ENCODE measurements at regions of chr7 and their contacts with region 1.

Region 1: DNA sequence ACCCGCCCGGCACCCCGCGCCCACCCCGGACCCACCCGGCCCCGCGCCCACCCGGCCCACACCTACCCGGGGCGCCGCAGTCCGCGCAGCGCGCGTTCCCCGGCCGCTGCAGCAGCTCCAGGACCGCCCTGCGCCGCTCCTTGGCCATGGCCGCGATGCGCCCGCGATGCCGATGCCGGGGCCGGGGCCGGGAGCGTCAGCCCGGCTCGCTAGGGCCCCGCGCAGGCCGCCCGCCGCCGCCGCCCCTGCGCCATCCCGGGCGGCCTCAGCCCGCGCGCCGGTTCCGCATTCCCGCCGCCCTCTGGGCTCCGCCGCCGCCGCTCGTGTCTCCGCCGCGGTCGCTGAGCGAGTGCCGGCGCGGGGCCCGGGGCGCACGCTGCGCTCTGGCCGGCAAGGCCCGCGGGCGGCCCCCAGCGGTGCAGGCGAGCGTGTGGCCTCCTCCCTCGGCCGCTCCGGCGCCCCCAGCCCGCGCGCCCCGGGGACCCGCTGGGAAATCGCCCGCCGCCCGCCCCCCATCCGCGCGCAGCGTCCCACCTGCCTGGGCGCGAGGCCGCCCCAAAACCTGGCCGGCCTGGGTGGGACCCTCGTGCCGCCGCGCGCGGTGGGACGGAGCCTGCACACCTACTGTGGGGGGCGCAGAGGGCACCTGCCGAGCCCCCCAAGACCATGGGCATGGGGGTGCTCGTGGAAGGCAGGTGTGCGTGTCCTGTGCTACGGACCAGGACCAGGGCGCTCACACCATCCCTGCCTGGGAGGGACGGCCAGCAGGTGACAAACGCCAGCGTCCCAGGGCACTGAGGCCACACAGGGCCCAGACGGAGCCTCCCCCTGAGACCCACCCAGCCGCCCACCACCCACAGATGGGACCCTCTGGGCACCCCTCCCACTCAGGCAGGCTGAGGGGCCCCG is at the start of gene ADAP1:
- DNase-seq: peak in 4 of 10 donors; percentile 52 to 78 (median 60)
- H3K4me3 ChIP-seq: peak within 1 kb of the TSS; percentile 49 to 90 (median 80)
- H3K27ac ChIP-seq: peak within 1 kb of the TSS in 58 of 59 donors; percentile 55 to 98 (median 93)
- H3K27me3 ChIP-seq: no peaks in the 10 kb centered on the region
- CTCF ChIP-seq: peak in 28 of 56 donors; percentile 7 to 60 (median 32)
- total RNA-seq, gene ADAP1: 97.0 to 199 (median 136) TPM

Region 2: GRCh38 chr7:909358-910329 is 44.9 kb before region 1 on chr7:
- intact Hi-C with region 1: loop called (anchors 1 to 2 kb)
- DNase-seq: peak in 5 of 10 donors; percentile 57 to 68 (median 64)
- H3K4me3 ChIP-seq: peak overlapping the region in 33 of 59 donors; percentile 9 to 55 (median 38)
- H3K27ac ChIP-seq: peak overlapping the region; percentile 49 to 100 (median 97)
- H3K27me3 ChIP-seq: no peaks in the 10 kb centered on the region
- CTCF ChIP-seq: peak in 2 of 56 donors; percentile 3 to 5

Region 3: DNA sequence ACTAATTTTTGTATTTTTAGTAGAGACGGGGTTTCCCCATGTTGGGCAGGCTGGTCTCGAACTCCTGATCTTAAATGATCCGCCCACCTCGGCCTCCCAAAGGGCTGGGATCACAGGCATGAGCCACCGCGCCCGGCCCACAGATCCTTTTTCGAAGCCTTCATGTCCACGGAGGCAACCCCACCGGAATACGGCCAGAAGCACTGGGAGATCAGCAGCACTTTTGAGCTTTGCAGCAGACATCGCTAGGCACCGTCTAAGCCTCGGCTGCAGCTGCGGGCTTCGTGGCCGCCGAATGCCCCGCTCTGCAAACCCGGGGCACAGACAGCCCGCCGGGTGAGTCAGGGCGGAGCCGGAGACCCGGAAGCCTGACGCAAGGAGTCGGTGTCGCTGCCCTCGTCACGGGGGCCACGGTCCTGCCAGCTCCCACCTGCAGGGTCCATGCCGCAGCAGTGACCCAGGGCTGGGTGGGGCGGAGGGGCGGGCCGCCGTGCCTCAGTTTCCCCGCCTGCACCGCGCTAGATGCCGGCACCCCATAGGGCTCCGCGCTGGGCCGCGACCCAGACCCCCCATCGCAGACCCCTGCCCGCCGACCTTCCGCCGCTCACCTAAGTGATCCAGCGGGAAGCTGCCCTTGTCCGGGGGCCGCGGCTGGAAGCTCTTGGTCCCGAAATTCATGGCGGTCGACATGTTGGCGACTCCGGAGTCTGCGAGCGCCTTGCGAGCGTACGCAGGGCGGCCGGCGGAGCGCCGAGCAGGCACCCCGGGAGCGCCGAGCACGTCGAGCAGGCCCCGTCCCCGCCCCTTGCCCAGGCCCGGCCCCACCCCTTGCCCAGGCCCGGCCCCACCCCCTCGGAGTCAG is 20.5 kb after region 1 on chr7 and contains the start of gene COX19:
- intact Hi-C with region 1: loop called in 1 of 2 experiments (anchors 2 kb)
- DNase-seq: peak; percentile 70 to 95 (median 82)
- H3K4me3 ChIP-seq: peak within 1 kb of the TSS; percentile 61 to 100 (median 98)
- H3K27ac ChIP-seq: peak within 1 kb of the TSS in 58 of 59 donors; percentile 21 to 98 (median 89)
- H3K27me3 ChIP-seq: no peaks in the 10 kb centered on the region
- CTCF ChIP-seq: peak in 24 of 56 donors; percentile 11 to 51 (median 27)
- total RNA-seq, gene COX19: 11.2 to 38.9 (median 18.5) TPM

Measured in dorsolateral prefrontal cortex (tissue), 120 donors.